ENCODE measurements at regions of chr14 and their contacts with region 1.

Region 1: DNA sequence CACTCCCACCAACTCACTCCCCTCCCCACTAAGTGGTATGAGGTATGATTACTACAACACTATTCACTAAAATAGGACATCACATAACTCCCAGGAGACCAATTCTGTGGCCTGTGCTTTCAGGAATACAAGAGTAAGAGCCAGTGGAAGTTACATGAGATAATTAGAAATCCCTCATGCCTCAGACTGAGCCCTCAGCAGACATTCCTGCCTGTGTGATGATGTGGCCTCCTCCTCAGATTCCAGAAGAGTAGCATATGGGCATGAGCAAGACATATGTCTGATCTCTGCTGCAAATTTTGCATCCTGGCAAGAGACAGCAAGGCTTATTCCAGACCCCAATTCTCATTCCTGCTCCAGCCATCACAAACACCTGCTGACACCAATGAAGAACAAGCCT is 46.0 kb upstream of the BMP4 start:
- DNase-seq: no peak
- ATAC-seq: no peak
- H3K4me3 Mint-ChIP-seq: no peak overlapping the region
- H3K27ac Mint-ChIP-seq: no peak overlapping the region
- H3K4me1 Mint-ChIP-seq: peaks cover 40% of the 10 kb centered on the region
- H3K27me3 Mint-ChIP-seq: peaks cover 6% of the 10 kb centered on the region; the same call in 1 of the 2 replicates
- CTCF ChIP-seq: no peak

Region 2: DNA sequence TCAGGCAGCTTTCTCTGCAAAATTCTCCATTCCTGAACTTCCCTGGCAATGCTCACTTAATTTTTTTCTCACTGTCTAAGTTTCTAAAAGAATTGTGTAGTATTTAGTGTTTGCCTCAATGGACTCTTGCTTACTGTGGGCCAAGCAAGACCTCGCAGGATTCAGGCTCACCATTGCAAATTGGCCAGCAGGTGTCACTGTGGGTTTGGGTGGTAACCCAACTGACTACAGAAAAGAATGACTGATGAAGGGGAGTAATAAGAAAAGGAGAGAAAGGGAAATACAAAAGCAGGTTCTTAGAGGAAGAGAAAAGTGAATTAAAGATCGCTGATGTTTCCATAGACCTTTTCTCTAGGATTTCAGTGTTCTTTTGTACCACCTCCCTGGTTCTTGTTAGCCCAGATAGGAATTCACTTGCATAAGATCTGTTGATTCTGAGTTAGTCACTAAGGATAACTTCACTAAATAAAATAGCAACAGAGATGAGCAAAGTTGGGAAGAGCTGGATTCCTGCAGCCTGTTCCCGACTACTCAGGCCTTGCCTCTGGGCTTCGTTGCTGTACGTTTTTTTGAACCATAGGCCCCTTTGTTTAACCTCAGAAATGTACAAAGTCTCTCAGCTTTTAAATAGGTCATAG is 463.0 kb before region 1 on chr14:
- CTCF ChIA-PET with region 1: interaction called, 10 read pairs
- POLR2A ChIA-PET with region 1: no interaction called
- DNase-seq: peak; percentile 90
- ATAC-seq: peak; percentile 97
- H3K4me3 Mint-ChIP-seq: no peak overlapping the region
- H3K27ac Mint-ChIP-seq: no peak overlapping the region
- H3K4me1 Mint-ChIP-seq: peaks cover 8% of the 10 kb centered on the region; the same call in 1 of the 2 replicates
- H3K27me3 Mint-ChIP-seq: no peaks in the 10 kb centered on the region
- CTCF ChIP-seq: peak; percentile 52; the same call in 1 of the 2 replicates

Region 3: GRCh38 chr14:53953002-53953827 is 49.4 kb before region 1 on chr14:
- CTCF ChIA-PET with region 1: interaction called, 16 read pairs
- POLR2A ChIA-PET with region 1: no interaction called
- DNase-seq: peak; percentile 81
- ATAC-seq: peak; percentile 33
- H3K4me3 Mint-ChIP-seq: peak overlapping the region; percentile 97
- H3K27ac Mint-ChIP-seq: peak overlapping the region; percentile 94
- H3K4me1 Mint-ChIP-seq: peaks cover 53% of the 10 kb centered on the region
- H3K27me3 Mint-ChIP-seq: peaks cover 85% of the 10 kb centered on the region
- CTCF ChIP-seq: no peak

Region 4: GRCh38 chr14:53979747-53980642 is 22.7 kb before region 1 on chr14:
- CTCF ChIA-PET with region 1: interaction called, 17 read pairs
- POLR2A ChIA-PET with region 1: no interaction called
- DNase-seq: peak; percentile 47
- ATAC-seq: peak; percentile 46
- H3K4me3 Mint-ChIP-seq: no peak overlapping the region; the same call in 1 of the 2 replicates
- H3K27ac Mint-ChIP-seq: peak overlapping the region; percentile 34; the same call in 1 of the 2 replicates
- H3K4me1 Mint-ChIP-seq: peaks cover 66% of the 10 kb centered on the region
- H3K27me3 Mint-ChIP-seq: peaks cover 40% of the 10 kb centered on the region
- CTCF ChIP-seq: no peak

Measured in WTC11 (cell line).